ENCODE measurements at regions of chr2 and their contacts with region 1.

Region 1: DNA sequence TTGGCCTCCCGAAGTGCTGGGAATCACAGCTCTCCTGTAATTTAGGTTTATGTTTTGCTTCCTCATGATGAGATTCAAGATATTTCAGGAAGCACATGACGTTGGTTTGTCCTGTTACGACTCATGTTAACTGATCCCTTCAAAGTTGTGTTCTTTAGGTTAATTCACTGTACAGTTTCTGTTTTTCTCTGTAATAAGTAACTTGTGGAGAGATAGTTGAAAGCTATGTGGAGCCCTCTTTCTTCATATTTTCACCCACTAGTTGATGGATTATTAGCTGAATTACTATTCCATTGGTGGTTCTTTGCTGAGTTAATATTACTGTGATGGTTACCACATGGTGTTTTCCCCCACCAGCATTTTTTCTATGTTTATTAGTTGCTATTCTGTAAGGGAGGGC is 18.3 kb upstream of the CHCHD5 start:
- DNase-seq: no peak

Region 2: DNA sequence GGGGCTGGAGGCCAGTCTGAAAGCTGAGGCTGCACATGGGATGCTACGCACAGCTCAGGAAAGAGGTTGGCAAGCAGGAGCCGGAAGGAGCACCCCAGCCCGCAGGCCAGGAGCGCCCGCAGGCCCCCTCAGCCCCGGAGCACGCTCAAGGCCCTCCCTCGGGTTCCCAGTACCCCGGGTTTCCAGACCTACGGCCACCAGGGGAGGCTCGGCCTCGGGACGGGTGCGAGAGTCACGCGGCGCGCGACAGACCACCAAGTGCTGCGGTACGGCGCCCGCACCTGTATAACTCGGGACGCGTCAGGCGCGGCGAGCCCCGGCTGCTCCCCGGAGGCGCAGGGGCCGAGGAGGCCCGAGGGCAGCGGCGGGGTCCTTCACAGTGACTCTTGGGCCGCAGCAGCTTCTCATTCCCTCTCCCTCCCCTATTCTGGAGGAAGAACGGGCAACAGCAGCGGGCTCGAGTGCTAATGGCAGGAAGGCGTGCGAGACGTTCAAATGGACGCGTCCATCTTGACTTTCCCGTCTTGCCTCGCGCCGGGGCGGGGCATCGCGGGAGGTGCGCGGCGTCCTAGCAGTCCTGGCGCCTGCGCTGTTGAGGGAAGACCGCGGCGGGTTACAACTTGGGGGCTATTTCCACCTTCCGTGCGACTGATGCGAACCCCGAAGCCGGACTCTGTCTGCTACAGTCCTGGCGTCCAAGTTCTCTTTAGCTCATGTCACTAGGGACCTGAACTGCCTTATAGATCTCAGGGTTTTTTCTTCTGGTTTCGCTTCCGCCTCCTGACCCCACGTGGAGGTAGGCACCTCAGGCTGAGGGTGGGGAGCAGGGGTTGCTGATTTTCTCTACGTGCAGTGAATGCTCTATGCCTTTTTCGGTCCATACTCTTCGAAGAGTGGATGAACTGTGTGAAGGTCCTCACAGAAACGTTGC is 682.2 kb before region 1 on chr2 and contains the start of gene ANAPC1:
- in situ Hi-C with region 1: loop called (anchors 25 kb)
- DNase-seq: peak; percentile 90

Measured in KBM-7 (cell line).